H1 (cell line): ENCODE measurements at regions of chr1 and their contacts with region 1.

Region 1: GRCh38 chr1:226626577-226626956 is 78.0 kb downstream of the STUM start:
- DNase-seq: peak; percentile 56 to 91
- H3K4me3 ChIP-seq: no peak overlapping the region
- H3K27ac ChIP-seq: no peak overlapping the region
- H3K4me1 ChIP-seq: no peaks in the 10 kb centered on the region
- H3K27me3 ChIP-seq: peaks cover 0 to 10% (median 10%) of the 10 kb centered on the region in 4 experiments; a peak in 6 of 7 replicates
- CTCF ChIP-seq: peak; percentile 86 to 94 (median 88)
- EP300 ChIP-seq: no peak
- POLR2A ChIP-seq: no peak
- RAD21 ChIP-seq: peak; percentile 81 to 85

Region 2: DNA sequence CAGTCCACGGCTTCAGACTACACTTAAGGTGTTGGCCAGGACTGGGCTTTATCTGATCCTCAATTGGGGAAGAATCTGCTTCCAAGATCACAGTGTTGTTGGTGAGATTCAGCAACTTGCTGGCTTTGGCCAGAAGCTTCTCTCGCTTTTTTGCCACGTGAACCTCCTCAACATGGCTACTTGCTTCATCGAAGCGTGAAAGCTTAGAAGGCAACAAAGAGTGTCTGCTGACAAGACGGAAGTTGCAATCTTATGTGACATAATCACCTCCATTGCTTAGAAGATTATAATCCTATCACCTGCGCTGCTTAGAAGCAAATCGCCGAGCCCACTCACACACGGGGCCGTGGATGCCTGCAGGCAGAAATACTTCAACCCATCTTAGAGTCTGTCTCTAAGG is 122.9 kb after region 1 on chr1:
- CTCF ChIA-PET with region 1: no interaction called
- POLR2A ChIA-PET with region 1: no interaction called
- DNase-seq: no peak
- H3K4me3 ChIP-seq: no peak overlapping the region
- H3K27ac ChIP-seq: no peak overlapping the region
- H3K4me1 ChIP-seq: no peaks in the 10 kb centered on the region
- H3K27me3 ChIP-seq: no peaks in the 10 kb centered on the region; a peak in 1 of 7 replicates
- CTCF ChIP-seq: no peak
- EP300 ChIP-seq: no peak
- POLR2A ChIP-seq: no peak
- RAD21 ChIP-seq: no peak

Region 3: DNA sequence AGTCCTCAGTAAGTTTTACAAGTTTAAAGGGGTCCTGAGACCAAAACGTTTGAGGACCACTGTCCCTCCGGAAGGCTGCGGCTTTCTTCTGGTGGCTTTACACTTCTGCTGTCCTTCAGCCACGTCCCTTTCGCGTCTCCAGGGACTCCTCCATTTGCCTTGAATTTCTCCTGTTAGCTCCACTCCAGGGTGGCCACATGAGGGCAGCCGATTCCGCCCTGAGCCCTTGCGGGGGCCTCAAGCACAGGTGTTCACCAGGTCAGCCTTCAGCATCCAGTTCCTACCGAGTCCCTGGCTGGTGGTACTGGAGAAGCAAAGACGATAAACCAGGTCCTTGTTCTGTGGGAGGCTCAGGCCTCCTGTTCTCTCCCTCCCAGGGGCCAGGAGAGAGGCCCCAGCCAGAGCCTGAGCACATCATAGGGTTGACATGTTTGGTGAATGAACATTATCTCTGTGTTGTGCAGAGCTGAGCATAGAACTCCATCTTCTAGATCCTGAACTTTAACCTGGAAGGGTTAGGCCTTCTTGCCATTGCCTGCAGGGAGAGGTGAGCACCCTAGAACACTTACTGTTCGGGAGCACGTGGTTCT is 286.1 kb after region 1 on chr1:
- CTCF ChIA-PET with region 1: interaction called, 10 read pairs
- POLR2A ChIA-PET with region 1: no interaction called
- DNase-seq: peak; percentile 57 to 76
- H3K4me3 ChIP-seq: no peak overlapping the region
- H3K27ac ChIP-seq: no peak overlapping the region
- H3K4me1 ChIP-seq: no peaks in the 10 kb centered on the region
- H3K27me3 ChIP-seq: no peaks in the 10 kb centered on the region
- CTCF ChIP-seq: peak; percentile 80 to 88 (median 82)
- EP300 ChIP-seq: no peak
- POLR2A ChIP-seq: no peak
- RAD21 ChIP-seq: peak; percentile 96 to 97